ENCODE measurements at regions of chr9 and their contacts with region 1.

Region 1: DNA sequence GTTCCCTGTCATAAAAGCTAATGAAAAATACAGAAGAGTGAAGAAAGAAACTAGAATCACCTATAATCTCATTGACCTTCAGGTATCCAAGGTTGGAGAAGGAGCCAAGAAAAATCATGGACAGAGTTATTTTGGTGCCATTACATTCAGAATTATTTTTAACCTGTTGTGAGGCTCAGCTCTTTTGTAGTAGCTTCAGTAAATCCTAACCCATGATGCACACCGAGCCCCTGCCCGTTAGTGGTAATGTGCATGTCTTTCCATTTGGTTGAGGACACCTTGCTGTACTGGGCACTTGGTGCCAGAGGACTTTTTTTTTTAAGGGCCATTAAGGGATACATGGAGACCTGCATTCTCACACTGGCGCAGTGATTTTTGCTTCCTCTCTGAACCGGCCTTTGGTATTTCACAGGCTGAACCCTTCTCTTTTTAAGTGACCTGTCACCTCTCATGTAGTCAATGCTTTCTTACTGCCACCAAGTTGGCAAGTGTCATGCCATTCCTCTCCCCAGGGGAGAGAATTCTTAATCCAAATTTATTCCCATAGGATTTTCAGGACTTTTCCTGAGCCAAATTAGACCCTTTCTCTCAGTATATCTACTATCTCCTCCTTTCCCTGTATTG is 125.6 kb downstream of the SMARCA2 start:
- DNase-seq: no peak
- ATAC-seq: peak; percentile 60 to 74 (median 66)
- H3K4me3 ChIP-seq: no peak overlapping the region
- H3K27ac ChIP-seq: peak overlapping the region; percentile 18 to 69 (median 60)
- H3K4me1 ChIP-seq: peaks cover 0 to 38% (median 17%) of the 10 kb centered on the region in 12 donors
- H3K27me3 ChIP-seq: no peaks in the 10 kb centered on the region
- CTCF ChIP-seq: no peak
- POLR2A ChIP-seq: no peak

Region 2: GRCh38 chr9:2234371-2234893 is 93.7 kb after region 1 on chr9:
- intact Hi-C with region 1: loop called in 2 of 10 experiments (anchors 10 kb)
- DNase-seq: peak in 2 of 5 donors; percentile 29 to 54
- ATAC-seq: peak; percentile 73 to 86 (median 79)
- H3K4me3 ChIP-seq: no peak overlapping the region
- H3K27ac ChIP-seq: peak overlapping the region in 4 of 12 donors; percentile 23 to 45 (median 26)
- H3K4me1 ChIP-seq: peaks cover 0 to 30% (median 5%) of the 10 kb centered on the region in 12 donors
- H3K27me3 ChIP-seq: no peaks in the 10 kb centered on the region
- CTCF ChIP-seq: no peak
- POLR2A ChIP-seq: no peak

Region 3: GRCh38 chr9:2638871-2639673 is 498.4 kb after region 1 on chr9:
- intact Hi-C with region 1: loop called in 1 of 10 experiments (anchors 10 kb)
- DNase-seq: no peak
- ATAC-seq: no peak
- H3K4me3 ChIP-seq: no peak overlapping the region
- H3K27ac ChIP-seq: no peak overlapping the region
- H3K4me1 ChIP-seq: peaks cover 0 to 32% (median 10%) of the 10 kb centered on the region in 12 donors
- H3K27me3 ChIP-seq: no peaks in the 10 kb centered on the region
- CTCF ChIP-seq: no peak
- POLR2A ChIP-seq: no peak

Region 4: DNA sequence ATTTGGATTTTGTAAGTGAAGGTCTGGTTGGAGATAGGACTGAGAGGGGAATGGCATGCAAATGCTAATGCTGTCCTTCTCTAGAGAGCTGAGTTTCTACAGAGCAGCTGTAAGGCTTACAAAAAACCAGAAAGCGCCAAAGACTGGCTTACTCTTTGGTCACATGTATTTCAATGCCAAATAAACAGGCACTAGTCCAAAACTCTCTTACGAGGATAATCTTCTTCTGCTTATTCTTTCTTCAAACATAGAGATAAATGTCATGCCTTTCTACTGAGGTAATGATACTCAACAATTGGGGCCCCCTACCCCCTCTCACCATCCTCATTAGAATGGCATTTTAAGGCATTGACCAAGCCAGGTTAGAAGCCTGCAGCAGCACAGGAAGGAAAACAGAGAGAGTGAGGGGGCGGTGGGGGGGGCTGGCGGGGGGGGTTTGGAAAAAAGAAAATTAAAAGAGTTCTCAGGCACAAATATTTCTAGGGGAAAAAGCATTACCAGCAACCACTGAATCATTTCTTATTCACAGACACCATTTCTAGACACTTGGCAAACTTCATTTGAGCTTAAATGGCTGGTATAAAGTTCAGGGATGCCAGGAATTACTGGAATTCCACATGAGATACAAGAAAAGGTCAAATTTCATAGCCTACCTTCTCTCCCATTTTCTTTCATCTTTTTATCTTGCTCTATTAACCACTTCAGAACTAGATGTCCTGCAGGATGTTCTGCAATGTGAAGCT is 669.1 kb after region 1 on chr9:
- intact Hi-C with region 1: loop called in 1 of 10 experiments (anchors 10 kb)
- DNase-seq: peak in 1 of 5 donors; percentile 29
- ATAC-seq: peak; percentile 47 to 88 (median 84)
- H3K4me3 ChIP-seq: peak overlapping the region in 1 of 12 donors; percentile 14
- H3K27ac ChIP-seq: peak overlapping the region; percentile 40 to 82 (median 58)
- H3K4me1 ChIP-seq: peaks cover 0 to 30% (median 16%) of the 10 kb centered on the region in 12 donors
- H3K27me3 ChIP-seq: no peaks in the 10 kb centered on the region
- CTCF ChIP-seq: no peak
- POLR2A ChIP-seq: no peak

Measured in heart left ventricle (tissue), 16 donors.